ENCODE measurements at regions of chr5 and their contacts with region 1.

Region 1: DNA sequence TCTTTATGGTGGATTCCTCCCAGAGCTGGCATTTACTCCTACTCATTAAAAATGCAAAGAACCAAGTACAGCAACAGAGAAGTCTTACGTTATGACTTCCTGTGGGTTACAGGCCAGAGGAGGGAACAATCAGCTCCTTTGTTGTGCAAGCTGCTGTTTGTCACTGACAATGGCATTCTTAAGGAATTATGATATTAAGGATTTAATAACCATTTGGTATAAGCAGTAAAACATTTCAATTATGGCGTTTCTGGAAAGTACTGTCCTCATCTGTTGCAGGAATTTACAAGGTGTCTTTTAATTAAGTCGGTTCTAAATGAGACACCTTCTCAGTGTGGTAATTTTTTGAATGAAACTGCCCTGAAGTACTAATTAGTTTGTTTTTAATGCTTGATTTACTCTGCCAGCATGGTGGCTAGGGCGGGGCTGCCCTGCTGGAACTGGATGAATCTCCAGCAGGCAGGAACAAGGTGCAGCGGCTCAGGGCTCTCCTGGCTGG is 49.1 kb upstream of the VDAC1 start:
- DNase-seq: no peak

Region 2: GRCh38 chr5:134004592-134005375 is 49.1 kb before region 1 on chr5 and contains the start of gene VDAC1:
- in situ Hi-C with region 1: no loop called
- DNase-seq: peak; percentile 83
- total RNA-seq, gene VDAC1: 410 and 470 TPM in 2 replicates

Region 3: GRCh38 chr5:134125039-134126015 is 71.4 kb after region 1 on chr5:
- in situ Hi-C with region 1: loop called (anchors 5 kb)
- DNase-seq: peak; percentile 91

Measured in G401 (cell line).